ENCODE measurements at regions of chr12 and their contacts with region 1.

Region 1: GRCh38 chr12:6323340-6323994 is 13.0 kb downstream of the PLEKHG6 start:
- DNase-seq: peak; percentile 74
- H3K4me3 ChIP-seq: no peak overlapping the region
- H3K27me3 ChIP-seq: no peaks in the 10 kb centered on the region
- CTCF ChIP-seq: peak; percentile 75

Region 2: DNA sequence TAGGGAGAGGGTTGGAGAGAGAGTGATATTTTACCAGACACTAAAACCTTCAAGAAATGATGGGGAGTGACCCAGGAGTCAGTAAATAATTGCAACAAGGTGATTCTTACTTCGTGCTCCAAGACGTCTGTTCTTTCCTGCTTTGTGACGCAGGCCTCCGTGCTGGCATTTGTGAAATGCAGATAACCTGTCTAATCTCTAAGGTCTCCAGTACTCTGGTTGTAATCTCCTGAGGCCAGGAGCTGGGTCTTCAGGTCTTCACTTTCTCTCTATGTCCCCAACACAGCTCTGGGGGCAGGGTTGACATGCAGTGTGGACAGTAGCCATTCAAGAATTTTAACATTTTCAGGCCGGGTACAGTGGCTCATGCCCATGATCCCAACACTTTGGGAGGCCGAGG is 70.2 kb before region 1 on chr12:
- CTCF ChIA-PET with region 1: no interaction called
- POLR2A ChIA-PET with region 1: no interaction called
- DNase-seq: no peak
- H3K4me3 ChIP-seq: no peak overlapping the region
- H3K27me3 ChIP-seq: peaks cover 8% of the 10 kb centered on the region
- CTCF ChIP-seq: no peak

Region 3: GRCh38 chr12:6312529-6313325 is 10.7 kb before region 1 on chr12:
- CTCF ChIA-PET with region 1: interaction called, 13 read pairs
- POLR2A ChIA-PET with region 1: no interaction called
- DNase-seq: no peak
- H3K4me3 ChIP-seq: no peak overlapping the region
- H3K27me3 ChIP-seq: peaks cover 12% of the 10 kb centered on the region
- CTCF ChIP-seq: no peak

Region 4: DNA sequence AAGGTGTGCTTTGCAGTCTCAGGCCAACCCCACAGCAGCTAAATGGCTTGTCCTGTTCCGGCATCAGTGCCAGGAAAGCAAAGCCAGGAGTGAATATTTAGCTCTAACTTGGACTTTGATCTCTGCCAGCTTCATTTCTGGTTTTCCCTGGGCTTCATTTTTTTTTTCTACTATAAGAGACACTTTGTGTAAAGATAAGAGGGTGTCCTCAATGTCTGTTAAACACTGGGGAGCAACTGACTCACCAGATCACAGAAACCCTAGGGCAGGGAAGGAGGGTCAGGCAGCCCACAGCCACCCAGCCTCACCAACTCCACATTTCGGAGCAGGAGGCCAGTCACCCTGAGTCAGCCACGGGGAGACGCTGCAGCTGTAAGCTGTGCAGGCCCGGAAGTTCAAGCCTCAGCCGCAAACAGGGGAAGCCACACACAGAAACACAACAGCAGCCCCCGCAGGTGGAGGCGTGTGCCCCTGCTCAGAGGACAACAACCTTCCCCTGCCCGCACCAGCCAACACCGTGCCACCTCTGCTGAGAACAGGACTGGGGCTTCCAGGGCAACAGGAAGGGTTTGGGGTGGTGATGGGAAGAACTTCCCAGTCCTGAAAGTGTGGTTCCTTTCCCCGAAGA is 12.1 kb after region 1 on chr12:
- CTCF ChIA-PET with region 1: interaction called, 16 read pairs
- POLR2A ChIA-PET with region 1: interaction called, 6 read pairs
- DNase-seq: no peak
- H3K4me3 ChIP-seq: peak overlapping the region; percentile 36
- H3K27me3 ChIP-seq: no peaks in the 10 kb centered on the region
- CTCF ChIP-seq: peak; percentile 75

Measured in BJ (cell line).